Right ventricle myocardium inferior (tissue), 1 donor: ENCODE measurements at regions of chr9 and their contacts with region 1.

Region 1: DNA sequence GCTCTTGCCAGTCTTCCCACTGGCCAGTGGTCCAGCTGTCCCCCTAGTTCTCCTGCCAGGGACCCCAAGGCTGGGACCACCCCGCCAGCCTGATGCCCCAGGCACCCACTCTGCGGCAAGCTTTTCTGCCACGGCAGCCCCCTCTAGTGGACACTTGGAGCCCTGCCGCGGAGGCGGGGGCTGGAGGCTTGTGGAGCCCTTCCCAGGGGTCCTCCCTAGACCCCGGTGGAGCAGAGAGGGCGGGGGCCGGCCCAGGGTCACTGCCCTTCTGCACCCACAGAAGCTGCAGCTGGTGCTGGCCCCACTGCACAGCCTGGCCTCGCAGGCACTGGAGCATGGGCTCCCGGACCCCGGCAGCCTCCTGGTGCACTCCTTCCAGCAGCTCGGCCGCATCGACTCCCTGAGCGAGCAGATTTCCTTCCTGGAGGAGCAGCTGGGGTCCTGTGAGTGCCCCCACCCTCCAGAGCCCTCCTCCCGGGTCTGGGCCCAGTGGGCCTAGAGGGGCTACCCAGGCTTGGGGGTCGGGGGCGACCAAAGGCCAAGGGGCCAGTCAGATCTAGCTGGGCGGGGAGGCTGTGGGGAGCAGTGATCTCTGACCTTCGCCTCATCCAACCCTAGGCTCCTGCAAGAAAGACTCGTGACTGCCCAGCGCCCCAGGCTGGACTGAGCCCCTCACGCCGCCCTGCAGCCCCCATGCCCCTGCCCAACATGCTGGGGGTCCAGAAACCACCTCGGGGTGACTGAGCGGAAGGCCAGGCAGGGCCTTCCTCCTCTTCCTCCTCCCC is 9.1 kb downstream of the EGFL7 start:
- DNase-seq: no peak
- ATAC-seq: no peak

Region 2: DNA sequence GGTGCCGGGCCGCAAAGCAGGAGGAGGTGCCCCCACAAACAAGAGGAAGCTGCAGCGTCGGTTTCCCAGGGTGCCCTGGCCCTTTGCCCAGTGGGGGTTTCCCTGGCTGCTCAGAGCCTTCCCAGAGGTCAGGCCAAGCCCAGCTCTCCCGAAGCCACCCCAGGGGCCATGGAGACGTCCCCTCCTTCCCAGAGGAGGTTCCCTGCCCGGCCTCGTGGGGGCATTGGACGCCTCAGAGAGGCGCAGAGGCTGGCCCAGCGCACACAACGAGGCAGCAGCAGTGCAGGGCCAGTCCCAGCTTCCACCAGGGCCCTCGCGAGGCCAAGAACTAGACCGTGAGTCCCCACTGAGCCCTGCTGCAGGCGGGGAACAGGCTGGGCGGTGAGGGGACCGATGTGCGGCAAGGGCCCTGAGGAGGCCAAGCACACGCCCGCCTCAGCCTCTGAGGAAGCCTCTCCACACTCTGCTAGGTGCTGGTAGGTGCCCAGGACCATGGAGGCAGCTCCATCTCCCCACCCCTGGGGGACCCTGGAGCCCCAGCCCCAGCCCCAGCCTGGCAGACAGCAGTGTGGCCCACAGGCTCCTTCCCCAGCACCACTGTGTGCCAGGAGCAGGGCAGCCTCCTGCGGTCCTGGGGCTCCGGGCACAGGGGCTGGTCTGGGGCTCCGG is 47.5 kb after region 1 on chr9:
- intact Hi-C with region 1: loop called (anchors 5 kb)
- DNase-seq: no peak
- ATAC-seq: no peak

Region 3: DNA sequence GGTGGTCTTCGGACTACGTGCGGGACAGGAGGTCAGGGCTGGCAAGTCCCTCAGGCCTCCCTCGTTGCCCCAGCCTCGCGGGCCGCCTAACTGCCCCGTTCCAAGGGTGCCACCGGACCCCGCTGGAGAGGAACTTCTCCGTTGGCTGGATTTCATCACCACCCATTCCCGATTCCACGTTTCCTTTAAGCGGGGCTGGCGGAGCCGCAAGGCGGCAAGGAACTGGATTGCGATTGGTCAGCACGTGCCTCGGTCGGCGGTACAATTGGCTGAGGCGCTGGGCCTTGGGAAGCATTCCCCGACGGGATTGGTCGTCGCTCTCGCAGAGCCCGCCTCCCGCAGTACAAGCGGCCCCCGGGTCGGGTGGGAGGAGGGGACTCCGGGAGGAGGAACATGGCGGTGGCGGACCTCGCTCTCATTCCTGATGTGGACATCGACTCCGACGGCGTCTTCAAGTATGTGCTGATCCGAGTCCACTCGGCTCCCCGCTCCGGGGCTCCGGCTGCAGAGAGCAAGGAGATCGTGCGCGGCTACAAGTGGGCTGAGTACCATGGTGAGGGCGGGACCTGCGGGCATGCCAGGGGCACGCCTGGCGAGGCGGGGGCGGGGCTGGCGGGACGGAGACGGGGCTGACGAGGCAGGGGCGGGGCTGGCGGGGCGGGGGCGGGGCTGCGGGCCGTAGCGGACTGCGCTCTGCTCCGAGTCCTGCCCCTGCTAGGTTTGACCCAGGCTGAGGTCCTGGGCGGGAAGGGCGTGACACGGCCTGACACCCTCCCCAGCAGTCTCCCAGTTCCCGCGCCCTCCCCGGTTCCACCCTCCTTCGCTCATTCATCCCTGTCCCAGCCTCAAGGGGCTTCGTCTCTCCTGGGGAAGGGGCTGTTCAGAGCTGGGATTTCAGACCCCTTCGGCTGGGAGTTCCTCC is 177.5 kb after region 1 on chr9 and contains the start of gene PHPT1:
- intact Hi-C with region 1: no loop called
- DNase-seq: peak; percentile 99
- ATAC-seq: peak; percentile 87
- total RNA-seq, gene PHPT1: 358 TPM